Heart left ventricle (tissue), 16 donors: ENCODE measurements at regions of chr4 and their contacts with region 1.

Region 1: GRCh38 chr4:112099701-112100297 is 45.5 kb upstream of the FAM241A start:
- DNase-seq: no peak
- ATAC-seq: peak; percentile 58 to 85 (median 70)
- H3K4me3 ChIP-seq: no peak overlapping the region
- H3K27ac ChIP-seq: no peak overlapping the region
- H3K4me1 ChIP-seq: peaks cover 0 to 24% (median 4%) of the 10 kb centered on the region in 12 donors
- H3K27me3 ChIP-seq: no peaks in the 10 kb centered on the region
- CTCF ChIP-seq: peak; percentile 54 to 84 (median 74)
- POLR2A ChIP-seq: no peak

Region 2: GRCh38 chr4:111334361-111334760 is 765.4 kb before region 1 on chr4:
- intact Hi-C with region 1: no loop called
- DNase-seq: no peak
- ATAC-seq: no peak
- H3K4me3 ChIP-seq: no peak overlapping the region
- H3K27ac ChIP-seq: no peak overlapping the region
- H3K4me1 ChIP-seq: no peaks in the 10 kb centered on the region
- H3K27me3 ChIP-seq: no peaks in the 10 kb centered on the region
- CTCF ChIP-seq: no peak
- POLR2A ChIP-seq: no peak

Region 3: GRCh38 chr4:112145326-112145819 is 45.6 kb after region 1 on chr4 and contains the start of gene FAM241A:
- intact Hi-C with region 1: loop called in 5 of 10 experiments (anchors 2 to 5 kb)
- DNase-seq: peak; percentile 90 to 96 (median 92)
- ATAC-seq: peak; percentile 98 to 99 (median 98)
- H3K4me3 ChIP-seq: peak within 1 kb of the TSS; percentile 74 to 94 (median 84)
- H3K27ac ChIP-seq: peak within 1 kb of the TSS; percentile 79 to 96 (median 90)
- H3K4me1 ChIP-seq: peaks cover 5 to 65% (median 43%) of the 10 kb centered on the region in 12 donors
- H3K27me3 ChIP-seq: no peaks in the 10 kb centered on the region
- CTCF ChIP-seq: peak in 1 of 12 donors; percentile 4
- POLR2A ChIP-seq: peak; percentile 53 to 98
- total RNA-seq, gene FAM241A: 5.4 to 10.3 (median 8.5) TPM

Region 4: DNA sequence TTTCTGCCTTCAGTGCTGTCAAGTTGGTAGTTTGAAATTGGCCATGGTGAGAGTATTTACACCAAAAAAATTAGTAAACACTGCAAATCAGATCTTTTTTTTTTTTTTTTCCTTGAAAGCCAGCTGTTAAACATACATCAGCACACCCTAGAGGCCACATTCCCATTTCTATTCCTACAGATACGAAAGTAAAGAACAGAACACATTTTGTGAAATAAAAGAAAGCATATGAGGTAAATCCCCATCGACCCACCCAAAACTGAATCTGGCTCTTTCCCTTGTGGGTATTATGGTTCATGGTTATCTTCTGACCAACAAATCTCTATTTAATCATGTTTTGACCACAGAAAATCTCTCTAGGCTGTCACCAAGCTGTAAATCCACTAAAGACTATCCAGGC is 90.0 kb after region 1 on chr4:
- intact Hi-C with region 1: loop called in 3 of 10 experiments (anchors 1 to 5 kb)
- DNase-seq: no peak
- ATAC-seq: no peak
- H3K4me3 ChIP-seq: no peak overlapping the region
- H3K27ac ChIP-seq: no peak overlapping the region
- H3K4me1 ChIP-seq: peaks cover 0 to 8% (median 0%) of the 10 kb centered on the region in 12 donors
- H3K27me3 ChIP-seq: no peaks in the 10 kb centered on the region
- CTCF ChIP-seq: peak in 6 of 12 donors; percentile 10 to 45 (median 24)
- POLR2A ChIP-seq: no peak

Region 5: GRCh38 chr4:112321776-112322684 is 222.2 kb after region 1 on chr4:
- intact Hi-C with region 1: loop called in 1 of 10 experiments (anchors 5 kb)
- DNase-seq: peak in 4 of 5 donors; percentile 34 to 56 (median 50)
- ATAC-seq: no peak
- H3K4me3 ChIP-seq: no peak overlapping the region
- H3K27ac ChIP-seq: no peak overlapping the region
- H3K4me1 ChIP-seq: peaks cover 0 to 17% (median 0%) of the 10 kb centered on the region in 12 donors
- H3K27me3 ChIP-seq: no peaks in the 10 kb centered on the region
- CTCF ChIP-seq: peak; percentile 75 to 98 (median 88)
- POLR2A ChIP-seq: no peak

Region 6: DNA sequence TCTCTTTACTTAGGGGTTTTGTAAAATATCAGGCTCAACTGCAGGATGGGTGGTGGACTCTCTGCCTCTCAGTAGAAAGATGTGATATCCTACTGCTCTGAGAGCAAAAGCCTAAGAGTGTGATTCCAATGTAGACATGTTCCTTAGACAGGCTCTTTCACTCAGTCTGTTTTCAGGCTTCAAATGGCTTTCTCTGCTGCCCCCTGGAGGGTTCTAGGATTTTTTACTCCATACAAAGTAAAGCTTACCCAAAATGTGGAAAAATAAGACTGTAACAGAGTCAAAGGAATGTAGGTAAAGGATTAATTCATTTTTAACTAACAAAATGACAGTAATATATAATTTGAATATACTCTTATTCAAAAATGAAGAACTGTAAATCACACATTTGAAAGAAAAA is 504.8 kb after region 1 on chr4:
- intact Hi-C with region 1: loop called in 1 of 10 experiments (anchors 10 kb)
- DNase-seq: peak in 3 of 5 donors; percentile 18 to 35 (median 19)
- ATAC-seq: peak; percentile 42 to 84 (median 64)
- H3K4me3 ChIP-seq: no peak overlapping the region
- H3K27ac ChIP-seq: no peak overlapping the region
- H3K4me1 ChIP-seq: no peaks in the 10 kb centered on the region
- H3K27me3 ChIP-seq: no peaks in the 10 kb centered on the region
- CTCF ChIP-seq: peak; percentile 22 to 72 (median 64)
- POLR2A ChIP-seq: no peak